Activated B cell treated with CpG ODN at 0.5 μM for 24 hours (primary cell): ENCODE measurements at regions of chr14 and their contacts with region 1.

Region 1: GRCh38 chr14:20970983-20971704 is 15.9 kb downstream of the RNASE2 start:
- DNase-seq: peak; percentile 77
- ATAC-seq: peak; percentile 95
- H3K4me3 Mint-ChIP-seq: peak overlapping the region; percentile 90
- H3K27ac Mint-ChIP-seq: no peak overlapping the region
- H3K4me1 Mint-ChIP-seq: peaks cover 9% of the 10 kb centered on the region
- H3K27me3 Mint-ChIP-seq: peaks cover 50% of the 10 kb centered on the region
- CTCF ChIP-seq: no peak

Region 2: GRCh38 chr14:20332788-20333493 is 638.2 kb before region 1 on chr14 and contains the start of gene CCNB1IP1:
- CTCF ChIA-PET with region 1: interaction called, 3 read pairs
- POLR2A ChIA-PET with region 1: no interaction called
- intact Hi-C with region 1: loop called (anchors 10 kb)
- DNase-seq: no peak
- ATAC-seq: peak; percentile 97
- H3K4me3 Mint-ChIP-seq: peak within 1 kb of the TSS; percentile 99
- H3K27ac Mint-ChIP-seq: peak within 1 kb of the TSS; percentile 89
- H3K4me1 Mint-ChIP-seq: peaks cover 29% of the 10 kb centered on the region
- H3K27me3 Mint-ChIP-seq: no peaks in the 10 kb centered on the region
- CTCF ChIP-seq: no peak
- total RNA-seq, gene CCNB1IP1: 34.0 and 35.3 TPM in 2 replicates

Region 3: GRCh38 chr14:20873370-20874177 is 97.6 kb before region 1 on chr14:
- CTCF ChIA-PET with region 1: no interaction called
- POLR2A ChIA-PET with region 1: no interaction called
- intact Hi-C with region 1: loop called (anchors 5 kb)
- DNase-seq: peak; percentile 66
- ATAC-seq: peak; percentile 71
- H3K4me3 Mint-ChIP-seq: no peak overlapping the region
- H3K27ac Mint-ChIP-seq: no peak overlapping the region
- H3K4me1 Mint-ChIP-seq: peaks cover 8% of the 10 kb centered on the region
- H3K27me3 Mint-ChIP-seq: peaks cover 26% of the 10 kb centered on the region
- CTCF ChIP-seq: peak; percentile 87

Region 4: DNA sequence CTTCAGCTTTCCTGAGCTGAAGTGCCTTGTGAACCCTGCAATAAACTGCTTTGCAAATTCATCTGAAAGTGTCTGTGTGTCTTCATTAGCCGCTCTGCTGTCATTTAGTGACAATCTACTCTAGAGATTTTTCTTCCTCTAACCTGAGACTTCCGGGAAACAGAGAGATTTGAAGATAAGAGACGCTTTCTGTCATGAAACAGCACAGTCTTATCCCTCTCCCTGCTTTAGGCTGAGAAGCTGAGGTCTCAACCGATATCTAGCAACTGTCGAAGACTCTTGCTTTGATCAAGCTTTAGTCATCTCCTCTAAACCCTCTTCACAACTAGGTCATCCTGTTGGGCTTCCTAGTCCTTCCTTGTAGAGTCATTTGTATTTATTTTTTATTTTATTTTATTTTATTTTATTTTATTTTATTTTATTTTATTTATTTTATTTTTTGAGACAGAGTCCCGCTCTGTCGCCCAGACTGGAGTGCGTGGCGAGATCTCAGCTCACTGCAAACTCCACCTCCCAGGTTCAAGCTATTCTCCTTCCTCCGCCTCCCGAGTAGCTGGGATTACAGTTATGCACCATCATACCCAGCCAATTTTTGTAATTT is 14.7 kb before region 1 on chr14:
- CTCF ChIA-PET with region 1: interaction called, 35 read pairs
- POLR2A ChIA-PET with region 1: interaction called, 3 read pairs
- intact Hi-C with region 1: loop called (anchors 1 kb)
- DNase-seq: no peak
- ATAC-seq: no peak
- H3K4me3 Mint-ChIP-seq: no peak overlapping the region
- H3K27ac Mint-ChIP-seq: no peak overlapping the region
- H3K4me1 Mint-ChIP-seq: peaks cover 4% of the 10 kb centered on the region
- H3K27me3 Mint-ChIP-seq: peaks cover 33% of the 10 kb centered on the region
- CTCF ChIP-seq: no peak

Region 5: GRCh38 chr14:20989572-20990551 is 18.7 kb after region 1 on chr14 and contains the start of gene METTL17:
- CTCF ChIA-PET with region 1: interaction called, 8 read pairs
- POLR2A ChIA-PET with region 1: no interaction called
- intact Hi-C with region 1: loop called (anchors 1 kb)
- DNase-seq: peak; percentile 68
- ATAC-seq: peak; percentile 97
- H3K4me3 Mint-ChIP-seq: peak within 1 kb of the TSS; percentile 94
- H3K27ac Mint-ChIP-seq: peak within 1 kb of the TSS; percentile 89
- H3K4me1 Mint-ChIP-seq: peaks cover 31% of the 10 kb centered on the region
- H3K27me3 Mint-ChIP-seq: no peaks in the 10 kb centered on the region
- CTCF ChIP-seq: no peak
- total RNA-seq, gene METTL17: 94.2 and 94.7 TPM in 2 replicates

Region 6: DNA sequence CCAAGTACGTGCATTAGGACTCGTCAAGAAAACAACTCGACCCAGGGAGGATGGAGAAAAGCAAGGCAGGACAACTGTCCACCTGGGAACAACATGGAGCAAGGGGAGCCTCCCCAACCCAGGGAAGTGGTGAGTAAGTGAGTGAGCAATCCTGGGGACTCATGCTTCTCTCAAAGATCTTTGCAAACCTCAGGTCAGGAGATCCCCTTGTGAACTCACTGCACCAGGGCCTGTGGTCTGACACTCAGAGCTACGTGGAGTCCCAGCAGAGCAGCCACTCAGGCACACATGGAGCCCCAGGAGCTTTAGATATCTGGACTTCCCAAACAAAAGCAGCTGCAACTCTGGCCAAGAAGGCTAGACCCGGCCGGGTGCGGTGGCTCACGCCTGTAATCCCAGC is 196.9 kb after region 1 on chr14:
- CTCF ChIA-PET with region 1: no interaction called
- POLR2A ChIA-PET with region 1: no interaction called
- intact Hi-C with region 1: no loop called
- DNase-seq: no peak
- ATAC-seq: no peak
- H3K4me3 Mint-ChIP-seq: no peak overlapping the region
- H3K27ac Mint-ChIP-seq: no peak overlapping the region
- H3K4me1 Mint-ChIP-seq: no peaks in the 10 kb centered on the region
- H3K27me3 Mint-ChIP-seq: peaks cover 34% of the 10 kb centered on the region
- CTCF ChIP-seq: no peak